GM10248 (cell line): ENCODE measurements at regions of chr12 and their contacts with region 1.

Region 1: GRCh38 chr12:103936679-103937078 is 6.5 kb downstream of the HSP90B1 start:
- DNase-seq: no peak
- CTCF ChIP-seq: no peak

Region 2: DNA sequence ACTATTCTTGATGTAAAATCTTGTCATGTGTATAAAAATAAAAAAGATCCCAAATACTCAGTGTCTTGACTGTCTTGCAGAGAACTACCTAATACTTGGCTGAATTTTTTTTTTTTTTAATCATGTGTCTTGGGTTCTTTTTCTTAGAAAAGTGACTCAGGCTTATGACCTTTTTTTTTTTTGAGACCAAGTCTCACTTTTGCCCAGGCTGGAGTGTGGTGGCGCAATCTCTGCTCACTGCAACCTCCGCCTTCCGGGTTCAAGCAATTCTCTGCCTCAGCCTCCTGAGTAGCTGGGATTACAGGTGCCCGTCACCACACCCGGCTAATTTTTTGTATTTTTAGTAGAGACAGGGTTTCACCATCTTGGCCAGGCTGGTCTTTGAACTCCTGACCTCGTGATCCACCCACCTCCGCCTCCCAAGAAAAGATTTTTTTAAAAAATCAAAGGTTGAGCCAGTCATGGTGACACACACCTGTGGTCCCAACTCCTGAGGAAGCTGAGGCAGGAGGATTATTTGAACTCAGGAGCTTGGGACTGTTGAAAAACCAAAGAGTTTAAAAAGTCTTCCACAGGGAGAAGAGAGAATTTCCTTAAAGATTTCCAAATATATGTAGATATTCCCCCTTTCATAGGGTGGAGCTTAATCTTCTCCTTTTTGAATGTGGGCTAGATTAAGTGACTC is 11.3 kb after region 1 on chr12:
- CTCF ChIA-PET with region 1: interaction called, 12 read pairs
- POLR2A ChIA-PET with region 1: interaction called, 6 read pairs
- DNase-seq: no peak
- CTCF ChIP-seq: no peak